ENCODE measurements at regions of chr4 and their contacts with region 1.

Region 1: GRCh38 chr4:10018818-10019461 is 2.4 kb downstream of the SLC2A9 start:
- DNase-seq: peak; percentile 28
- H3K4me3 ChIP-seq: no peak overlapping the region
- H3K27ac ChIP-seq: no peak overlapping the region
- H3K4me1 ChIP-seq: no peaks in the 10 kb centered on the region
- CTCF ChIP-seq: peak; percentile 77

Region 2: GRCh38 chr4:9704551-9705332 is 314.2 kb before region 1 on chr4:
- CTCF ChIA-PET with region 1: interaction called, 3 read pairs
- POLR2A ChIA-PET with region 1: no interaction called
- intact Hi-C with region 1: loop called (anchors 1 kb)
- DNase-seq: no peak
- H3K4me3 ChIP-seq: no peak overlapping the region
- H3K27ac ChIP-seq: no peak overlapping the region
- H3K4me1 ChIP-seq: no peaks in the 10 kb centered on the region
- CTCF ChIP-seq: no peak

Region 3: GRCh38 chr4:9762823-9763475 is 256.0 kb before region 1 on chr4:
- CTCF ChIA-PET with region 1: no interaction called
- POLR2A ChIA-PET with region 1: no interaction called
- intact Hi-C with region 1: loop called (anchors 1 kb)
- DNase-seq: peak; percentile 58
- H3K4me3 ChIP-seq: no peak overlapping the region
- H3K27ac ChIP-seq: no peak overlapping the region
- H3K4me1 ChIP-seq: no peaks in the 10 kb centered on the region
- CTCF ChIP-seq: peak; percentile 73

Region 4: DNA sequence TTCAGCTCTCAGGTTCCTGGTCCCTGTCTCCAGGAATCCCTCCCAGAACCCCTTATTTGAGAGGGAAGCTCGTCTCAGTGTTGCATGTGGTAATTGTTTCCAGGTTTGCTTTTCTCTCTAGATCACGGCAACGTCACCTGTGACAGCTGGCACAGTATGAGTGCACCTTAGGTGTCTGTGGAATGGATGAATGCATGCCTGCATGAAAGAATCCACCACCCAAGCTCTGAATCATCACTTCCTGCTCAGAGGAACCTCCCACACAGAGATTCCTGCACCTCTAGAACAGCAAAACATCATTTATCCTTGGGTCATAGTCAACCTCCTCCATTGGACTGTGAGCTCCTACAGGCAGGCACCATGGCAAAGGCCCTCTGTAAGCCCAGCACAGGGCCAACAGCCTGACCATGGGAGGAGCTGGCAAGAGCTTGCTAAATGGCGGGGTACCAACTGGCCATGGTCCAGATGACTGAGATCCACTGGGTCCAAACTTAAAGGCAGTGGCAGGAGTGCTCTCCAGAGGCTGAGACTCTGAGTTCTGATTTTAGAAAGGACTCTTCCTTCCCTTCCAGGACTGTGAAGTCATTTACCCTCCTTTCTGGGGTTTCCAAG is 113.9 kb before region 1 on chr4:
- CTCF ChIA-PET with region 1: no interaction called
- POLR2A ChIA-PET with region 1: no interaction called
- intact Hi-C with region 1: loop called (anchors 10 kb)
- DNase-seq: no peak
- H3K4me3 ChIP-seq: no peak overlapping the region
- H3K27ac ChIP-seq: no peak overlapping the region
- H3K4me1 ChIP-seq: no peaks in the 10 kb centered on the region
- CTCF ChIP-seq: no peak

Measured in OCI-LY7 (cell line).